Activated CD8-positive, alpha-beta T cell treated with anti-CD3 and anti-CD28 coated beads for 36 hours (primary cell): ENCODE measurements at regions of chr4 and their contacts with region 1.

Region 1: GRCh38 chr4:110005461-110006056 is 92.9 kb downstream of the EGF start:
- DNase-seq: no peak
- ATAC-seq: peak; percentile 77
- H3K4me3 Mint-ChIP-seq: no peak overlapping the region
- H3K27ac Mint-ChIP-seq: no peak overlapping the region
- H3K4me1 Mint-ChIP-seq: peaks cover 2% of the 10 kb centered on the region
- H3K27me3 Mint-ChIP-seq: peaks cover 2% of the 10 kb centered on the region
- CTCF ChIP-seq: peak; percentile 90

Region 2: DNA sequence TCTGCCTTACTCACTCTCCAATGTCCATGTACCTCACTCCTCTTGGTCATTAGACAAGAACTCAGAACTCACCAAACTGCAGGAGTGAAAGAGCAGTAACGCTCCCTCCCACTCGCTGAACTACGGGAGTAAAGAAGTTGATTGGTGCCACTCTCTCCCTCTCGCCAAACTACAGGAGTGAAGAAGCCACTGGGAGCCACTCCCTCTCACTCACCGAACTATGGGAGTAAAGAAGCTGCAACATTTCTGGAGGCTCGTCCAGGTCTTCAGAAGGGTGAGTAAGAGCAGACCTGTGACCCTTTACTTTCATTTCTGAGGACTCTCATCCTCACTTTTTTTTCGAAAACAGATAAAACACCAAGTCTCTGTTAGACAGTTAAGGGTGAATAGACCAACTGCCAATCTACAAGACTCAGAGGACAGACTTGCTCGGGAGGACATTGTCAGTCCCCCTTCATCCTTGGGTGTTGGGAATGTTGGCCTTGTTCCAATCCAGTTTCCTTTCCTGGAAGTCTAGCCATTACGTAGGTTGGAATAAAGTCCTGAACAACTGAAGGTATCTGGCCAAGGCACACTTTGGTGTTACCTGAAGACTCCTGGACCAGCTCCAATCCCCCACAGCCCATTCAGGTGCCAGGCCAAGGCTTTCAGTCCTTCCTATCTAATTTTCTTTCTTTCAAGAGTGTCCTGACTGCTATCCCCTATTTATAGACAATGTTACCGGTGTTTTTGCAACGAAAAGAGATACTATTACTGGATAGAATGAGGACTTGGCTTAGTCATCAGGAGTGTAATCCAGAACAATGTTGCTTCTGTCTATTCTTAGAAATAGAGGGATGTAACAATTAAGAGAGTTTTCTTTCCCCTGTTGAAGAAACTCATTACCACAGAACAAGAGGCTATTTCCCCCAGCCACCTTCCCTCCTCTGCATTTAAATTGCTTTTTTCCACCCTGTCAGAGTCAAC is 692.1 kb before region 1 on chr4:
- CTCF ChIA-PET with region 1: no interaction called
- POLR2A ChIA-PET with region 1: no interaction called
- intact Hi-C with region 1: no loop called
- DNase-seq: no peak
- ATAC-seq: no peak
- H3K4me3 Mint-ChIP-seq: no peak overlapping the region
- H3K27ac Mint-ChIP-seq: no peak overlapping the region
- H3K4me1 Mint-ChIP-seq: no peaks in the 10 kb centered on the region
- H3K27me3 Mint-ChIP-seq: peaks cover 4% of the 10 kb centered on the region
- CTCF ChIP-seq: no peak

Region 3: GRCh38 chr4:109931318-109931717 is 74.2 kb before region 1 on chr4:
- CTCF ChIA-PET with region 1: no interaction called
- POLR2A ChIA-PET with region 1: no interaction called
- intact Hi-C with region 1: no loop called
- DNase-seq: no peak
- ATAC-seq: no peak
- H3K4me3 Mint-ChIP-seq: no peak overlapping the region
- H3K27ac Mint-ChIP-seq: no peak overlapping the region
- H3K4me1 Mint-ChIP-seq: no peaks in the 10 kb centered on the region
- H3K27me3 Mint-ChIP-seq: no peaks in the 10 kb centered on the region
- CTCF ChIP-seq: no peak

Region 4: DNA sequence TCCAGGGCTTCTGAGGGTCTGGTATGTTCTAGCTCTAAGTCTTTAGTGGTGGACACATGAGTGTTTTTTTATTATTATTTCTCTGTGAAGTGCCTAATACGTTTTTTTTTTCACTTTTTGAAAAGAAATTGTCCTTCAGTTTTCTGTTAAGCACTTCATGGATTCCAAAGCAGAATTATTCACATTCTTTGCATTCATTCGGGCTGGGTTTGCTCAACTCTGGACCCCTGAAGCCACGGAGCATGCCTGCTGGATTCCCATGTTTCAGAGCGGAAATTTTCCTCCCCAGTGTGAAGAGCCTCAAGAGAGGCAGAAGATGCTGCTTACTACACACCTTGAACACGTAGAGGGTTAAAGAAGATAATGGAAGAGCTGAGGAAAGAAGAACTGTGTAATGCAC is 14.6 kb after region 1 on chr4:
- CTCF ChIA-PET with region 1: interaction called, 15 read pairs
- POLR2A ChIA-PET with region 1: no interaction called
- intact Hi-C with region 1: no loop called
- DNase-seq: no peak
- ATAC-seq: no peak
- H3K4me3 Mint-ChIP-seq: no peak overlapping the region
- H3K27ac Mint-ChIP-seq: no peak overlapping the region
- H3K4me1 Mint-ChIP-seq: peaks cover 12% of the 10 kb centered on the region
- H3K27me3 Mint-ChIP-seq: no peaks in the 10 kb centered on the region
- CTCF ChIP-seq: no peak

Region 5: DNA sequence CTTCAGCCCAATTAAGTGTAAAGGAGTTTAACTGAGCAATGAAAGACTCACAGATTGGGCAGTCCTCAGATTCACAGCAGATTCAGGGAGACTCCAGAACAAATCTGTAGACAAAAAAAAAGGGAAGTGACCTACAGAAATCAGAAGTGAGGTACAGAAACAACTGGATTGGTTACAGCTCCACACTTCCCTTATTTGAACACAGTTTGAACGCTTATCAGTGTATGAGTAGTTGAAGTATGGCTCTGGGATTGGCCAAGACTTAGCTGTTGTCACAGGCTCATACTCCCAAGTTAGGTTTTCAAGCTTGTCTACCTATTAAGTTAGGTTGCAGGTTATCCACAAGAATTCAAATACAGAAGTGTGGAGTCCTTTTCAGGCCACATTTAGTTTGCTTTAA is 305.2 kb after region 1 on chr4:
- CTCF ChIA-PET with region 1: interaction called, 4 read pairs
- POLR2A ChIA-PET with region 1: no interaction called
- intact Hi-C with region 1: loop called (anchors 10 kb)
- DNase-seq: no peak
- ATAC-seq: no peak
- H3K4me3 Mint-ChIP-seq: no peak overlapping the region
- H3K27ac Mint-ChIP-seq: no peak overlapping the region
- H3K4me1 Mint-ChIP-seq: no peaks in the 10 kb centered on the region
- H3K27me3 Mint-ChIP-seq: peaks cover 13% of the 10 kb centered on the region
- CTCF ChIP-seq: no peak

Region 6: GRCh38 chr4:110510955-110511544 is 505.5 kb after region 1 on chr4:
- CTCF ChIA-PET with region 1: interaction called, 194 read pairs
- POLR2A ChIA-PET with region 1: no interaction called
- intact Hi-C with region 1: no loop called
- DNase-seq: no peak
- ATAC-seq: no peak
- H3K4me3 Mint-ChIP-seq: no peak overlapping the region
- H3K27ac Mint-ChIP-seq: no peak overlapping the region
- H3K4me1 Mint-ChIP-seq: peaks cover 9% of the 10 kb centered on the region
- H3K27me3 Mint-ChIP-seq: peaks cover 1% of the 10 kb centered on the region
- CTCF ChIP-seq: peak; percentile 84